BJ (cell line): ENCODE measurements at regions of chr6 and their contacts with region 1.

Region 1: GRCh38 chr6:27146706-27147505 is 100.6 kb upstream of the PRSS16 start:
- DNase-seq: peak; percentile 100
- H3K4me3 ChIP-seq: peak overlapping the region; percentile 63
- H3K27me3 ChIP-seq: no peaks in the 10 kb centered on the region
- CTCF ChIP-seq: no peak

Region 2: GRCh38 chr6:25997921-25998320 is 1149.0 kb before region 1 on chr6:
- CTCF ChIA-PET with region 1: no interaction called
- POLR2A ChIA-PET with region 1: interaction called, 21 read pairs
- DNase-seq: no peak
- H3K4me3 ChIP-seq: no peak overlapping the region
- H3K27me3 ChIP-seq: no peaks in the 10 kb centered on the region
- CTCF ChIP-seq: no peak

Region 3: DNA sequence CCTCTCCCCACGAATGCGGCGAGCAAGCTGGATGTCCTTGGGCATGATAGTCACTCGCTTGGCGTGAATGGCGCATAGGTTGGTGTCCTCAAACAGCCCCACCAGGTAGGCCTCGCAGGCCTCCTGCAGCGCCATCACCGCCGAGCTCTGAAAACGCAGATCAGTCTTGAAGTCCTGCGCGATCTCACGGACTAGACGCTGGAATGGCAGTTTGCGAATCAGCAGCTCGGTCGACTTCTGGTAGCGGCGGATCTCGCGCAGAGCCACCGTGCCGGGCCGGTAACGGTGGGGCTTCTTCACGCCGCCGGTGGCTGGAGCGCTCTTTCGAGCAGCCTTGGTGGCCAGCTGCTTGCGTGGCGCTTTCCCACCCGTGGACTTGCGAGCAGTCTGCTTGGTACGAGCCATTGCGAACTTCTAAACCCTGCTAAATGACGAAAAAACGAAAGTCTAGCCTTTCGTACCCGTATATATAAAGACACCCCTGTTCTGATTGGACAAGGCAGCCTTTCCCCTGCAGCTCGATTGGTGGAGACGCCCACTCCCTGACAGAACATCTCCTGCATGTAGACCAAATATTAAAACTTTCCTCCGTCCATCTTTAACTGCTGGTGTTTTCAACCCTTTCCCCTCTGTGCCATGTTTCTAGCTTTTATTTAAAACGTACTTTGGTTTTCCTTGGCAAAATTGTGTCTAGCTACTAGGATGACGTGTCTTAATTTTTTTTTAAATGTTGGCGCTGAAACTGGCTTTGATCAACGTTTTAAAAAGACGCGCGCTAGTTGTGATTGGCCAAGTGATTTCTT is 949.9 kb before region 1 on chr6:
- CTCF ChIA-PET with region 1: no interaction called
- POLR2A ChIA-PET with region 1: interaction called, 12 read pairs
- DNase-seq: peak; percentile 83
- H3K4me3 ChIP-seq: peak overlapping the region; percentile 82
- H3K27me3 ChIP-seq: no peaks in the 10 kb centered on the region
- CTCF ChIP-seq: 0 out of 2 replicates have a peak, but pooled peaks have one; percentile 13

Region 4: GRCh38 chr6:27132532-27133280 is 14.2 kb before region 1 on chr6:
- CTCF ChIA-PET with region 1: interaction called, 5 read pairs
- POLR2A ChIA-PET with region 1: interaction called, 74 read pairs
- DNase-seq: peak; percentile 100
- H3K4me3 ChIP-seq: peak overlapping the region; percentile 59
- H3K27me3 ChIP-seq: no peaks in the 10 kb centered on the region
- CTCF ChIP-seq: no peak

Region 5: DNA sequence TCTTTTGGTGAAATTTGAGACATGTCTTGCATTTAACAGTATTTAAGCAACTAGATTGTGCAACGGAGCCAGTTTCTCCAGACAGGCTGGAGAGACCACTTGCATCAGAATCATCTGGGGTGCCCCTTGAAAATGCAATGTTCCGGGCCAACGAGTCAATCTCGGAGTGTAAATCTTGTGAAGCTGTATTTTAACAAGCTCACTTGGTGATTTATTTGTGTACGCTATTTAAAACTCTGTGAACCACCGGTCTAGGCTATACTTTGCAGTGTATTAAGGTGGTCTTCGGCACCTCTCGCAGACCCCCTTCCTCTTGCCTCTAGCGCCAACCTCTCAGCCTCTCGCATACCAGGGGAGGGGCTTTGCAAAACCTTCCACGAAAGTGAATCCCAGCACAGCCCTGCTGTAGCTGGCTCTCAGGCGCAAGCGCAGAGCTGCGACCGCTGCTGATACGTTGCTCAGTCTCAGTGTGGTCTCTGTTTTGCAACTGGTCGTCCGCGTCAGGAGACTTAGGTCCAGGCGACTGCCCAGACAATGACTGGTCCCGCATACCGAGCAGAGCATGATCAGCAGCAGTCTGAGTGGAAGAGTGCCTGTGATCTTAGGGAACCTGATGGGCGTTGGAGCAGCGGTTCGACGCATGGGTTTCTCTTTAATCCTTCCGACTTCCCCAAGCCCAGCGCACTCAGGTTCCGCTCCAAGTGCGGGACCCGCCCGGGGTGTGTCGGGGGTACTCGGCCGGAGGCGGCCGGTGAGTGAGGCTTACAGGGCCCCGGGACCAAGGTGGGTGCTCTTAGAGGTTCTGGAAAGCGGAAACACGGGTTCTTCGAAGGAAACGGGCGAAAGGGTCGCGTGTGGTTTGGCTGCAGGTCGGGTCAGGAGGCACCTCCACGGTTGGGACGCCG is 241.6 kb after region 1 on chr6 and contains the start of gene ZNF391:
- CTCF ChIA-PET with region 1: no interaction called
- POLR2A ChIA-PET with region 1: interaction called, 16 read pairs
- DNase-seq: peak; percentile 39
- H3K4me3 ChIP-seq: peak within 1 kb of the TSS; percentile 79
- H3K27me3 ChIP-seq: no peaks in the 10 kb centered on the region
- CTCF ChIP-seq: no peak
- polyA plus RNA-seq, gene ZNF391: 0.27 and 0.50 TPM in 2 replicates